ENCODE measurements at regions of chr22 and their contacts with region 1.

Region 1: DNA sequence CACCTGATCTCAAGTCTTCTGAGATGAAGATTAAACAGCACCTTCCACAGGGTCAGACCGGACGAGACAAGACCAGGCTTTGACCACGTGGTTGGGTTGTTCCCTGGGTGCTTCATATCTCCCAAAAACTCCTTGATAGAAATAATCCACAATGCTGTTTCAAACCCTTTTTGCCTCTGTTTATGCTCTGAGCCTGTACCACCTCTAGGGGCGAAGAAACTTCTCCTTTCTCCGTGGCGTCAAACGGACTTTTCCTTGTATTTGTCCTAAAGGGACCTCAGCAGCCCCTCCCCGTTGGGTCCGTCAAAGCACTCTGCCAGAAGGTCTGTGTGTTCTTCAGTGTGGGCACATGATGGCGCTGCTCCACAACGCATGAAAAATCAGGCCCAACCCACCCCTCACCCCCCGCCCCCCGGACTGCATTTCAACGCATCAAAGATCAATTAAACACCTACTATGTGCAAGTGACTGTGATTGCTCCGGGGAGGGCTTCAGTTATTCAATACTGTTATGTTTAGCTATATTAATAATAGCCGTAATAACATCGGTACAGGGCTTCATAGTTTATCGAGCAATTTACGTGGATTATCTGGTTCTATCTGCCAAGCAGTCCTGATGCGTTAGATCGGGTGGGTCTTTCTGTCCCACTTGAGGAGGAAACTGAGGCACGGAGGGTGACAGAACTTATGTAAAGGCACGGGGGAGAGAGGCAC is 17.3 kb upstream of the EIF3D start:
- DNase-seq: no peak
- H3K4me3 ChIP-seq: no peak overlapping the region
- H3K27ac ChIP-seq: no peak overlapping the region
- H3K4me1 ChIP-seq: peaks cover 29% of the 10 kb centered on the region
- H3K27me3 ChIP-seq: peaks cover 4% of the 10 kb centered on the region
- CTCF ChIP-seq: peak; percentile 41 to 64

Region 2: DNA sequence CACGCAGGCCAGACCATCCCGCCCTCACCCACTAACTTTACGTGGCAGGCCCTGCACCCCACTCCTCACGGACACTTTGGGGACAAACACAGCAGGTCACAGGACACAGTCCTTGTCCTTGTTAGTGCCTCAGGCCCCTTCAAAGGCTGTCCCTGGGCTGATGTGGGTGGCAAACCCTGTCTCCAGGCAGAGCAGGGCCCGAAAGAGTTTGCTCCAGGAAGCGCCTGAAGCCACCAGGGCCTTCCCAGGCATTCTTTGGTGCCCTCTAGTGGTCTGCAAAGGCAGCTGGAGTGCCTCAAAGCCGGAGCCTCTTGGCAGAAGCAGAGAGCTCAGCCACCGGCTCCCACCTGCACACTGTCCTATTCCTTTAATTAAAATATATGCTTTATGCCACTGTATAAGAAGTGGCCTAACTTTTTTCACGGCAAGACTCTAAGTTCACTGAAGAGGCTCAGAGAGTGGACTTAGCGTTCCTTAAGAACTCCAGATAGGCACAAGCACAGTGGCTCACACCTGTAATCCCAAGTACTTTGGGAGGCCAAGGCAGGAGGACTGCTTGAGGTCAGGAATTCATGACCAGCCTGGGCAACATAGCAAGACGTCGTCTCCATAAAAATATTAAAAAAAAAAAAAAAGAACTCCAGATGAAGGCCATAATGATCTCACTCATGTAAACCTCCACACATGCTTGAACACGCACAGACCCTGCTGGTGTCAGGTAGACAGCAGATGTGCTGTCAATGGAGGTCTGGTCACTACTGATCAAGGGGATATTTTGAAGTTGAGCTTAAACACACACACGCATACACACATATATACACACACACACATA is 75.9 kb before region 1 on chr22:
- CTCF ChIA-PET with region 1: no interaction called
- dilution Hi-C with region 1: no loop called
- in situ Hi-C with region 1: no loop called
- intact Hi-C with region 1: no loop called
- DNase-seq: peak; percentile 82
- H3K4me3 ChIP-seq: no peak overlapping the region
- H3K27ac ChIP-seq: peak overlapping the region; percentile 74
- H3K4me1 ChIP-seq: peaks cover 63% of the 10 kb centered on the region
- H3K27me3 ChIP-seq: no peaks in the 10 kb centered on the region
- CTCF ChIP-seq: peak; percentile 93 to 99

Region 3: DNA sequence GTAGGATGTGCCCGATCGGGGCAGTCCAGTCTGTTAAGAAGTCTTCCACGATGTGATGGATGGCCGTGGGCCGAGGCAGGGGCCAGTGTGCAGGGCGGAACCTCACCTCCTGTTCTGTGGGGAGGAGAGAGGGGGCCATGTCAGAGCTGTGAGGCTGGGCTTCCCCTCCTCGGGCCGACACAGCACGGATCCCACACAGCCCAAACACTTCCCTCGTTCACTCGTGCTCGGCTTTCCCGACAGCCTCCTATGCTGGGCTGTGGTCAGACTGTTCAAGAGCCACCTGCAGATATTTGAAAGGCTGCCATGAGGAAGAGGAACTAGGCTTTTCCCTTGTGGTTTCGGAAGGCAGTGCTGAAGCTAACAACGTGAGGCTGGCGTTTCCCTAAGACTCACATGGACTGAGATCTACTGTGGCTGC is 52.5 kb before region 1 on chr22:
- CTCF ChIA-PET with region 1: no interaction called
- dilution Hi-C with region 1: no loop called
- in situ Hi-C with region 1: no loop called
- intact Hi-C with region 1: no loop called
- DNase-seq: no peak
- H3K4me3 ChIP-seq: no peak overlapping the region
- H3K27ac ChIP-seq: no peak overlapping the region
- H3K4me1 ChIP-seq: no peaks in the 10 kb centered on the region
- H3K27me3 ChIP-seq: no peaks in the 10 kb centered on the region
- CTCF ChIP-seq: no peak

Region 4: GRCh38 chr22:36528795-36529751 is 17.2 kb before region 1 on chr22 and contains the start of gene EIF3D:
- CTCF ChIA-PET with region 1: no interaction called
- dilution Hi-C with region 1: no loop called
- in situ Hi-C with region 1: no loop called
- intact Hi-C with region 1: loop called (anchors 1 kb)
- DNase-seq: peak; percentile 100
- H3K4me3 ChIP-seq: peak within 1 kb of the TSS; percentile 85 to 90 (median 86)
- H3K27ac ChIP-seq: peak within 1 kb of the TSS; percentile 97
- H3K4me1 ChIP-seq: peaks cover 19% of the 10 kb centered on the region
- H3K27me3 ChIP-seq: no peaks in the 10 kb centered on the region
- CTCF ChIP-seq: peak in 1 of 2 donors; percentile 0
- total RNA-seq, gene EIF3D: 210 to 354 TPM

Region 5: GRCh38 chr22:36619797-36620399 is 73.7 kb after region 1 on chr22:
- CTCF ChIA-PET with region 1: no interaction called
- dilution Hi-C with region 1: no loop called
- in situ Hi-C with region 1: no loop called
- intact Hi-C with region 1: no loop called
- DNase-seq: peak; percentile 6
- H3K4me3 ChIP-seq: no peak overlapping the region
- H3K27ac ChIP-seq: no peak overlapping the region
- H3K4me1 ChIP-seq: no peaks in the 10 kb centered on the region
- H3K27me3 ChIP-seq: peaks cover 2% of the 10 kb centered on the region
- CTCF ChIP-seq: no peak

Region 6: GRCh38 chr22:36644333-36644757 is 98.1 kb after region 1 on chr22:
- CTCF ChIA-PET with region 1: interaction called, 4 read pairs
- dilution Hi-C with region 1: no loop called
- in situ Hi-C with region 1: no loop called
- intact Hi-C with region 1: loop called (anchors 2 kb)
- DNase-seq: peak; percentile 91
- H3K4me3 ChIP-seq: no peak overlapping the region
- H3K27ac ChIP-seq: no peak overlapping the region
- H3K4me1 ChIP-seq: peaks cover 10% of the 10 kb centered on the region
- H3K27me3 ChIP-seq: peaks cover 2% of the 10 kb centered on the region
- CTCF ChIP-seq: no peak

Region 7: DNA sequence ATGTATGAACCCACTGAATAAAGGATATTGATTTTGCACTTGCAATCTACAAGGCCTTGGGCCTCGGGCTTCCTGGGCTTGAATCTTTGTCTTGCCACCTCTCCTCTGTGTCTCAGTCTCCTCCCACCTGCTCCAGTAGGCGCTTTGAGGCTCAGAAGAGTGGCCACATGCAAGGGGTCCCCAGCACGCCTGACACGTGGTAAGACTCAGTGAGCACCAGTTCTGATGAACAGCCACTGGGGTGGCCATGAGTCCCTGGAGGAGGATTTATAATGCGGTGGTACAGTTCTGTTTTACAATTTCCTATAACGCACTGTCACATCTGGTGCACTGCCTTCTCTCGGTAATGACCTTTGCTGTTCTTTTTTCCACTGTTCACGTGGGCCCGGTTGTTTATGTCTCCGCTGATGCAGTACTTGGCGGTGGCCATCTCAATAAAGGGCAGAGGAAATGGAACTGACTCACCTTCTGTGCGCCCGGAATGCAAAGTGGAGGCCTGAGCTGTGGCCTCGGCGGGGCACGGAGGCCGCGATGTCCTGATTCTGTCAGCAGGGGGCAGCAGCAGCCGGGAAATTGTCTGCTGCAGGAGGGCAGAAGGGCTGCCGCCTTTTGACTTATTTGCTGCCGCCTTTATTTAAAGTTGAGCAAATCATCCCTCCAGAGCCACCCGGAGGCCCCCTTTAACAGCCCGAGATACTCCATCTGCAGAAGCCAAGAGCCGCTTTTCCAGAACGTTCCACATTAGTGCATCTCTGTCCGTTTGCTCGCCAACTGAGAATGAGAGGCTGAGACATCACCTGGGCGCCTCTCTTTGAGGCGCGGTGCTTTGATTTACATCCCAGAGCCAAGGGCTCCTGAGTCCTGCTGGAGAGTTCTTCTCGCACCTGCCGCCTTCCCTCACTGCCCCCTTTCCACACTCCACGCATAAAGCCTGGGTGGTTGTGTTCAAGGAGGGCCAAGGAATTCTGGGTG is 235.7 kb after region 1 on chr22:
- CTCF ChIA-PET with region 1: interaction called, 4 read pairs
- dilution Hi-C with region 1: no loop called
- in situ Hi-C with region 1: loop called in 1 of 2 experiments (anchors 10 kb)
- intact Hi-C with region 1: loop called (anchors 2 kb)
- DNase-seq: peak; percentile 77
- H3K4me3 ChIP-seq: no peak overlapping the region
- H3K27ac ChIP-seq: no peak overlapping the region
- H3K4me1 ChIP-seq: peaks cover 4% of the 10 kb centered on the region
- H3K27me3 ChIP-seq: no peaks in the 10 kb centered on the region
- CTCF ChIP-seq: peak; percentile 86 to 87

Region 8: GRCh38 chr22:36865346-36865745 is 319.1 kb after region 1 on chr22:
- CTCF ChIA-PET with region 1: interaction called, 20 read pairs
- dilution Hi-C with region 1: no loop called
- in situ Hi-C with region 1: no loop called
- intact Hi-C with region 1: no loop called
- DNase-seq: peak; percentile 25
- H3K4me3 ChIP-seq: no peak overlapping the region
- H3K27ac ChIP-seq: no peak overlapping the region
- H3K4me1 ChIP-seq: peaks cover 9% of the 10 kb centered on the region
- H3K27me3 ChIP-seq: no peaks in the 10 kb centered on the region
- CTCF ChIP-seq: no peak

Region 9: DNA sequence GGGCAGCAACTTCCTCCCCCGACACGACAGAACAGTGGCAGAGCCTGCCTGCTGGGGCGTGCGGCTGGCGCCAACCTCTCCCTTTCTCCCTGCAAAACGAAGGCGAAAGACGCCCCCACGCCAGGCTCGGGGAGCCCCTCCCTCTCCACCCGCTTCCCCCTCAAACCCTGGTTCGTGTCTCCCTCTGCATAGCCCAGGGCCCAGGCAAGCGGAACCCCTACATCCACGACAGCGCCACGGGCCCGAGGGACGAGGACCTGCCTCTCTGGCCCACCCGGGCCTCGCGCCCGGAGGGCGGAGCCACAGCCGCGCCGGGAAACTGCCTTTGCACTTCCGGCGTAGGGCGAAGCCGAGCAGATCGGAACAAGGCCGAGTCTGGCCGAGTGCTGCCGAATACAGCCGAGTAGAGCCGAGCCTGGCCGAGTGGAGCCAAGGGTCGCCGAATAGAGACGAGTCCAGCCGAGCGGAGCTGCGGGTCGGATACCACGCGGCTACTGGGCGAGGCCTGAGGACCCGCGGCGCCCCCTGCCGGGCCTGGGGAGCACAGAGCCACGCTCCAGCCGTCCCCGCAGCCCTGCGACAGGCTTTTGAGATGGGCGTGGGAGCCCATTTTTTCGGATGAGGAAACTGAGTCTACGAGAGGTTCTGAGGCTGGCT is 653.0 kb after region 1 on chr22:
- CTCF ChIA-PET with region 1: no interaction called
- dilution Hi-C with region 1: no loop called
- in situ Hi-C with region 1: no loop called
- intact Hi-C with region 1: loop called (anchors 5 kb)
- DNase-seq: peak; percentile 94
- H3K4me3 ChIP-seq: peak overlapping the region; percentile 70 to 87 (median 84)
- H3K27ac ChIP-seq: peak overlapping the region; percentile 65
- H3K4me1 ChIP-seq: peaks cover 35% of the 10 kb centered on the region
- H3K27me3 ChIP-seq: no peaks in the 10 kb centered on the region
- CTCF ChIP-seq: peak; percentile 68 to 87